ENCODE measurements at regions of chr4 and their contacts with region 1.

Region 1: GRCh38 chr4:67700738-67701516 is at the start of gene UBA6:
- DNase-seq: peak; percentile 89
- H3K4me3 ChIP-seq: peak within 1 kb of the TSS; percentile 84
- H3K27ac ChIP-seq: peak within 1 kb of the TSS; percentile 86
- H3K4me1 ChIP-seq: peaks cover 12% of the 10 kb centered on the region
- H3K27me3 ChIP-seq: no peaks in the 10 kb centered on the region
- CTCF ChIP-seq: peak; percentile 54; the same call in 1 of the 2 replicates
- total RNA-seq, gene UBA6: 51.0 and 64.2 TPM in 2 replicates

Region 2: GRCh38 chr4:67545199-67546003 is 155.5 kb before region 1 on chr4 and contains the start of gene CENPC:
- CTCF ChIA-PET with region 1: no interaction called
- POLR2A ChIA-PET with region 1: no interaction called
- intact Hi-C with region 1: loop called (anchors 2 kb)
- DNase-seq: peak; percentile 86 to 90
- H3K4me3 ChIP-seq: peak within 1 kb of the TSS; percentile 98
- H3K27ac ChIP-seq: peak within 1 kb of the TSS; percentile 75
- H3K4me1 ChIP-seq: peaks cover 9% of the 10 kb centered on the region
- H3K27me3 ChIP-seq: no peaks in the 10 kb centered on the region
- CTCF ChIP-seq: no peak
- total RNA-seq, gene CENPC: 14.1 and 14.2 TPM in 2 replicates